ENCODE measurements at regions of chr3 and their contacts with region 1.

Region 1: DNA sequence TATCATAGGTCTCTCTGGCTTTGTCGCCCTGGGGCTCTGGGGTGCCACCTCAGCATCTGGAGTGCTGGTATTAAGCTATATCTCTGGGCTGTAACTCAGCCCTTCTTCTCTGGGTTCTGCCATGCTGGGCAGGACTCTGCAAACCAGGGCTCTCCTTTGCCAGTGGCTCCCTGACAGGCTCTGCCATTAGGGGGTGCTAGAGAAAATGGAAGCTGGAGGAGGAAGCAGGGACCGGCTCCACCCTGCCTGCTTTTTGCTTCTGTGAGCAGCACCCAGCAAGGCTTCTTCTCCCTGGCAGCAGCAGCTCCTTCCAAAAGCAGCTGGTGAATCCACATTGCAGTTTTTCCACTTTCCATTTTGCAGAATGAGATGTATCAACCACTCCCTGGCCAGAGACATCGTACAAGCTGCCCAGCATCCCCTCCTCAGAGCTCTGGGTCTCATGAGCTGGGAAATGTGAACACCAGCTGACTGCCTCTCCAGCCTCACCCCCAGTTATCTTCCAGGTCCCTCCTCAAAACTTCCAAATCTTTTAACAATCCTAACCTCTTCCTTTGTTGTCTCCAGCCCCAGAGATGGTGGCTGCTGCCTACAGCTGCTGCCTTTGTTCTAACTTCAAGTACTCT is 165.0 kb downstream of the ABHD5 start:
- DNase-seq: peak; percentile 60
- ATAC-seq: peak; percentile 76
- H3K4me3 ChIP-seq: no peak overlapping the region
- H3K4me3 Mint-ChIP-seq: no peak overlapping the region
- H3K27ac ChIP-seq: no peak overlapping the region
- H3K27ac Mint-ChIP-seq: no peak overlapping the region
- H3K4me1 ChIP-seq: peaks cover 0 to 4% of the 10 kb centered on the region in 2 donors
- H3K4me1 Mint-ChIP-seq: peaks cover 3% of the 10 kb centered on the region
- H3K27me3 ChIP-seq: peaks cover 0 to 33% (median 10%) of the 10 kb centered on the region in 4 experiments
- H3K27me3 Mint-ChIP-seq: peaks cover 66% of the 10 kb centered on the region
- CTCF ChIP-seq: peak; percentile 54

Region 2: GRCh38 chr3:43769471-43770425 is 86.0 kb before region 1 on chr3:
- CTCF ChIA-PET with region 1: no interaction called
- POLR2A ChIA-PET with region 1: no interaction called
- intact Hi-C with region 1: no loop called
- DNase-seq: peak; percentile 68
- ATAC-seq: peak; percentile 76
- H3K4me3 ChIP-seq: no peak overlapping the region
- H3K4me3 Mint-ChIP-seq: no peak overlapping the region
- H3K27ac ChIP-seq: no peak overlapping the region
- H3K27ac Mint-ChIP-seq: no peak overlapping the region
- H3K4me1 ChIP-seq: peaks cover 0 to 5% of the 10 kb centered on the region in 2 donors
- H3K4me1 Mint-ChIP-seq: peaks cover 4% of the 10 kb centered on the region
- H3K27me3 ChIP-seq: peaks cover 0 to 11% (median 2%) of the 10 kb centered on the region in 4 experiments
- H3K27me3 Mint-ChIP-seq: peaks cover 32% of the 10 kb centered on the region
- CTCF ChIP-seq: peak; percentile 86

Region 3: GRCh38 chr3:43844757-43845156 is 11.0 kb before region 1 on chr3:
- CTCF ChIA-PET with region 1: interaction called, 11 read pairs
- POLR2A ChIA-PET with region 1: no interaction called
- intact Hi-C with region 1: no loop called
- DNase-seq: no peak
- ATAC-seq: no peak
- H3K4me3 ChIP-seq: no peak overlapping the region
- H3K4me3 Mint-ChIP-seq: no peak overlapping the region
- H3K27ac ChIP-seq: no peak overlapping the region
- H3K27ac Mint-ChIP-seq: no peak overlapping the region
- H3K4me1 ChIP-seq: no peaks in the 10 kb centered on the region
- H3K4me1 Mint-ChIP-seq: no peaks in the 10 kb centered on the region
- H3K27me3 ChIP-seq: peaks cover 0 to 5% (median 1%) of the 10 kb centered on the region in 4 experiments
- H3K27me3 Mint-ChIP-seq: peaks cover 34% of the 10 kb centered on the region
- CTCF ChIP-seq: no peak

Region 4: GRCh38 chr3:43919029-43919428 is 63.2 kb after region 1 on chr3:
- CTCF ChIA-PET with region 1: no interaction called
- POLR2A ChIA-PET with region 1: no interaction called
- intact Hi-C with region 1: no loop called
- DNase-seq: no peak
- ATAC-seq: no peak
- H3K4me3 ChIP-seq: no peak overlapping the region
- H3K4me3 Mint-ChIP-seq: no peak overlapping the region
- H3K27ac ChIP-seq: no peak overlapping the region
- H3K27ac Mint-ChIP-seq: no peak overlapping the region
- H3K4me1 ChIP-seq: no peaks in the 10 kb centered on the region
- H3K4me1 Mint-ChIP-seq: peaks cover 3% of the 10 kb centered on the region
- H3K27me3 ChIP-seq: peaks cover 0 to 12% (median 4%) of the 10 kb centered on the region in 4 experiments
- H3K27me3 Mint-ChIP-seq: peaks cover 49% of the 10 kb centered on the region
- CTCF ChIP-seq: no peak

Region 5: GRCh38 chr3:44021651-44022594 is 166.1 kb after region 1 on chr3:
- CTCF ChIA-PET with region 1: no interaction called
- POLR2A ChIA-PET with region 1: no interaction called
- intact Hi-C with region 1: no loop called
- DNase-seq: peak; percentile 30
- ATAC-seq: no peak
- H3K4me3 ChIP-seq: peak overlapping the region in 3 of 5 experiments; percentile 38 to 41 (median 39)
- H3K4me3 Mint-ChIP-seq: peak overlapping the region; percentile 65
- H3K27ac ChIP-seq: no peak overlapping the region
- H3K27ac Mint-ChIP-seq: no peak overlapping the region
- H3K4me1 ChIP-seq: peaks cover 10 to 14% of the 10 kb centered on the region in 2 donors
- H3K4me1 Mint-ChIP-seq: peaks cover 13% of the 10 kb centered on the region
- H3K27me3 ChIP-seq: peaks cover 0 to 34% (median 24%) of the 10 kb centered on the region in 4 experiments
- H3K27me3 Mint-ChIP-seq: peaks cover 42% of the 10 kb centered on the region
- CTCF ChIP-seq: no peak

Region 6: GRCh38 chr3:44077246-44077645 is 221.5 kb after region 1 on chr3:
- CTCF ChIA-PET with region 1: interaction called, 19 read pairs
- POLR2A ChIA-PET with region 1: no interaction called
- intact Hi-C with region 1: loop called (anchors 1 kb)
- DNase-seq: peak; percentile 31
- ATAC-seq: no peak
- H3K4me3 ChIP-seq: no peak overlapping the region
- H3K4me3 Mint-ChIP-seq: no peak overlapping the region
- H3K27ac ChIP-seq: no peak overlapping the region
- H3K27ac Mint-ChIP-seq: no peak overlapping the region
- H3K4me1 ChIP-seq: no peaks in the 10 kb centered on the region
- H3K4me1 Mint-ChIP-seq: peaks cover 8% of the 10 kb centered on the region
- H3K27me3 ChIP-seq: no peaks in the 10 kb centered on the region
- H3K27me3 Mint-ChIP-seq: no peaks in the 10 kb centered on the region
- CTCF ChIP-seq: no peak

Region 7: GRCh38 chr3:44114142-44114541 is 258.4 kb after region 1 on chr3:
- CTCF ChIA-PET with region 1: interaction called, 30 read pairs
- POLR2A ChIA-PET with region 1: no interaction called
- intact Hi-C with region 1: no loop called
- DNase-seq: peak; percentile 49
- ATAC-seq: peak; percentile 39
- H3K4me3 ChIP-seq: no peak overlapping the region
- H3K4me3 Mint-ChIP-seq: no peak overlapping the region
- H3K27ac ChIP-seq: no peak overlapping the region
- H3K27ac Mint-ChIP-seq: no peak overlapping the region
- H3K4me1 ChIP-seq: no peaks in the 10 kb centered on the region
- H3K4me1 Mint-ChIP-seq: no peaks in the 10 kb centered on the region
- H3K27me3 ChIP-seq: peaks cover 0 to 6% (median 0%) of the 10 kb centered on the region in 4 experiments
- H3K27me3 Mint-ChIP-seq: peaks cover 10% of the 10 kb centered on the region
- CTCF ChIP-seq: peak; percentile 47

Region 8: DNA sequence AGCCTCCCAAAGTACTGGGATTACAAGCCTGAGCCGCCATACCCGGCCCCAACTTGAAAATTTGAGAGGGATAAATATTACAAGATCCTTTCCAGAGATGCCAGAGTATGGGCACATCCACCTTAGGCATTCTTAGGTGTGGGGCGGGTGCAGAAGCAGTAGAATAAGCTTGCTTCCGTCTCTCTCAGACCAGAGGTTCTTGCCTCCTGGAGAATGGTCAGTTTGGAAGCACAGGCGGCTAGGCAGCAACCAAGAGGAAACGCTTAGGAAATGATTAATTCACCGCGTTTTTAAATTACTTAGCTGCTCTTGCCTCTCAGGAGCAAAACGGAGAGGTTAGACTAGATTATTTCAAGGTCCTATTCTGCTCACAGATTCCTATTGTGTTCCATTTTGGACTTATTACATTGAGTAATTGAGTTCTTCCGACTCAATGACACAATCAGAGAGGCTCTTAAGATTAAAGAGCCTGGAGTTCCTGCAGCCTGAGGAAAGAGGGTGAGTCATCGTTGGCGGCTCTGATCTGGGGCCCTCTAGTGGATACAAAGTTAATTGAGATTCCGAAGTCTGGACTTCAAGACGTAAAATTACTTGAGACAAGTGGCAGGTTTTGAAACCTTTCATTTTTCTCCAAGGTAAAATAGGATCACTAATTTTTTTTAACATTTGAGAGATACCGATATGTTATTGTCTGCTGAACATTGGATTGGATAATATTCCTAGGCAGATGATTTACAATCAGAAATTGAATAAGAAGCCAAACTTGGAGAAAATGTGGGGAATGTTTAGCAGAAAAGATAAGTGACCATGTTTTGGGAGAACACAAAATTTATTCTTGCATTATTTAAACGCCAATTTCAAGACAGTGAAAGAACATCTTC is 380.1 kb after region 1 on chr3:
- CTCF ChIA-PET with region 1: interaction called, 12 read pairs
- POLR2A ChIA-PET with region 1: no interaction called
- intact Hi-C with region 1: no loop called
- DNase-seq: peak; percentile 58
- ATAC-seq: peak; percentile 65
- H3K4me3 ChIP-seq: no peak overlapping the region
- H3K4me3 Mint-ChIP-seq: no peak overlapping the region
- H3K27ac ChIP-seq: no peak overlapping the region
- H3K27ac Mint-ChIP-seq: no peak overlapping the region
- H3K4me1 ChIP-seq: peaks cover 0 to 3% of the 10 kb centered on the region in 2 donors
- H3K4me1 Mint-ChIP-seq: peaks cover 5% of the 10 kb centered on the region
- H3K27me3 ChIP-seq: no peaks in the 10 kb centered on the region
- H3K27me3 Mint-ChIP-seq: peaks cover 14% of the 10 kb centered on the region
- CTCF ChIP-seq: peak; percentile 85